OCI-LY7 (cell line): ENCODE measurements at regions of chr2 and their contacts with region 1.

Region 1: GRCh38 chr2:80303909-80304837 is at the start of gene LRRTM1:
- DNase-seq: no peak
- H3K4me3 ChIP-seq: no peak within 1 kb of the TSS
- H3K27ac ChIP-seq: no peak within 1 kb of the TSS
- H3K4me1 ChIP-seq: no peaks in the 10 kb centered on the region
- CTCF ChIP-seq: no peak
- total RNA-seq, gene LRRTM1: not detected in 2 replicates

Region 2: DNA sequence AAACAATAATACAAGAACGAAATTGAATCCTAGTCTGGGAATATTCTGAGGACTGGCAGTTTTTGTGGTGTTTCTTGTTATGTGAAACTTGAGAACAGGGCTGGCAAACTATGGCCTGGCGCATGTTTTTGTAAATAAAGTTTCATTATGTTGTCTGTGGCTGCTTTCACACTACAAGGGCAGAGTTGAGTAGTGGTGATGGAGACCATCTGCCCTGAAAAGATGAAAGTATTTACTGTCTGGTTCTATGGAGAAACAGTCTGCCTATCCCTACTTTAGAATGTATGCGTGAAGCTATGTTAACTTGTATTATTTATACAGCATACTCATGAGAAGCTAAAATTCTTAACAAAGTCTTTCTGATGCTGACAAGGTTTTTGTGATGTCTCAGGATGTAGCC is 351.6 kb before region 1 on chr2:
- CTCF ChIA-PET with region 1: no interaction called
- POLR2A ChIA-PET with region 1: no interaction called
- intact Hi-C with region 1: no loop called
- DNase-seq: no peak
- H3K4me3 ChIP-seq: no peak overlapping the region
- H3K27ac ChIP-seq: no peak overlapping the region
- H3K4me1 ChIP-seq: no peaks in the 10 kb centered on the region
- CTCF ChIP-seq: no peak

Region 3: GRCh38 chr2:80335411-80335810 is 31.2 kb after region 1 on chr2:
- CTCF ChIA-PET with region 1: no interaction called
- POLR2A ChIA-PET with region 1: interaction called, 13 read pairs
- intact Hi-C with region 1: no loop called
- DNase-seq: no peak
- H3K4me3 ChIP-seq: no peak overlapping the region
- H3K27ac ChIP-seq: no peak overlapping the region
- H3K4me1 ChIP-seq: no peaks in the 10 kb centered on the region
- CTCF ChIP-seq: no peak

Region 4: DNA sequence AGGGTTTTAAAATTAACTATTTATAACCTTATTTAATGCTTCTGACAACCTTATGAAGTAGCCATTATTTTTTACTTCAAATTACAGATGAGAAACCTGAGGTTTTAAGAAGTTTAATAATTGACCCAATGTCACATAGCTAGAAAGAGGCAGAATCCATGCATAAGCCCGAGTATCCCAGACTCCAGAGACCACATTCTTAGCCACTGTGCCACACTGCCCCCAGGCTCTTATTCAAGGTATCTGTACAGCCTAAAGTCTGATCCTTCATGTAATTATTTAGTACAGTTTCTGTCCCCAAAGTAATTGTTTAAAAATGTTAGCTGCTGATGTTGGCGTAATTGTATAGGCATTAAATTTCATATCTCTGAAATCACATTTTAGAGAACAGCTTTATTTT is 125.1 kb after region 1 on chr2:
- CTCF ChIA-PET with region 1: no interaction called
- POLR2A ChIA-PET with region 1: no interaction called
- intact Hi-C with region 1: no loop called
- DNase-seq: no peak
- H3K4me3 ChIP-seq: no peak overlapping the region
- H3K27ac ChIP-seq: no peak overlapping the region
- H3K4me1 ChIP-seq: no peaks in the 10 kb centered on the region
- CTCF ChIP-seq: no peak